Dorsolateral prefrontal cortex (tissue), 120 donors: ENCODE measurements at regions of chr13 and their contacts with region 1.

Region 1: DNA sequence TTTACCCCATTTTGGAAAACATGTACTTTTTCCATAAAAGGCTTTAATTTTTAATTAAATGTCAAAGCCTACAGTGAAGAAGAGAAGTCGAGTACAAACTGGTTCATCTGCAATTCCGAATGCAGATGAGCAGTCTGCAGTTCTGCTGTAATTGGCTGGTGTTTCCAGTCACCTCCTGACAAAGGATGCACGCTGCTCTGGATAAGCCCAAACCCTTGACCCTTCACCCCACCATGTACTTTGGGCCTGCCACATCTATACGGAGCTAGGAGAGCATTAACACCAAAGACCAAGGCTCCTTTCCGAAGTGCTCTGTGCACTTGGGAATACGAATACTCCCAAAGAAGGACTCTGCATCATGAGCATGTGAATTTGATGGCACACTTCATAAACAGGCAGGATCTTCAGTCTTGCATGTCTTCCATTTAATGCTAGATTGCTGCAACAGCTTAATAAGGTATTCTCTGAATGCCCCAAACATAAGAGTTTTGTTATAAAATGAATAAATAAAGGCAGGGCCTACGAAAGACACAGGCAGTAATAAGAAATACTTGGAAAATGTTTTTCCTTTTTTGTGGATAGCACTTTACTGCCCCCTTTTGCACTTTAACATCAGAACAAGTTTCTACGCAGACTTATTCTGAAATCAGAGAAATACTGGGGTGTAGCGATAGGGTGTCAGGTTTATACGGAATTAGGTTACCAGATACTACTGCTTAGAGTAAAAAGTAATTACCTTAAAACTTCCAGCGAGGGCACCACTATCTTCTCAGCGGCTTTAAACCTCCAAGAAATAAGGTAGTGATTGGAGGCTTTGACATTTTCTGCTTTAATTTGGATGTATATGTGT is 15.0 kb downstream of the EFNB2 start:
- DNase-seq: no peak
- H3K4me3 ChIP-seq: peak overlapping the region in 42 of 59 donors; percentile 1 to 54 (median 18)
- H3K27ac ChIP-seq: peak overlapping the region in 54 of 59 donors; percentile 5 to 87 (median 66)
- H3K27me3 ChIP-seq: no peaks in the 10 kb centered on the region
- CTCF ChIP-seq: peak; percentile 15 to 80 (median 64)

Region 2: DNA sequence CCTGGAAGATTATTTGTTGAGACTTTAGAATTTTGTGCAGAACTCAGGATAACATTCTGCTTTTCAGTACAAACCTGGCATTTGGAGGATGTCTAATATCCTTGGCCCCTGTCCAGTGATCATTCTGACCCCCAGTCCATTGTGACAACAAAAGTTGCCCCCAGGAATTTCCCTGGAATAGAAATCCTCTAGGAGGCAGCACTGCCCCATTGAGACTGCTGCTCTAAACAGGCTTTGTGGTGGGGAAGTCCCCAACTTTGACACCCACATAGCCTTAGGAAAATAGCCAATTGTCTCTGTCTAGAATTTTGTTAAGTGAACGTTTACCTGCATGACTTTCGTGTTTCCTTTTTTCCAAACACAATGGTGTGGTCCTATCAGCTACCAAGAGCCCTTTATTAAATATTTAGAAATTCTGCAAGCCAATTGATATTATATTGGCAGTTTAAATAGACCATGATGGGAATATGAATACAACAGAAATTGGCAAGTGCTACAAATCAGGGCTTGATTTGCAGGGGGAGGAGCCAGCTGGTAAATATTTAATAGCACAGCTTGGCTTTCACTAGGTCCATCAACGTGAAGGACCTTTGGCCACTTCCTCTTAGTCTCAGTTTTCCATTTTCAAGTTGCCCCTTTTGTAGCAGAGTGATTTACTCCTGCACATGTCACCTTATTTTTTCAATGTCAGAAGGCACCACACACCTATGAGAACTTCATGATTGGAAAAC is 436.6 kb before region 1 on chr13:
- intact Hi-C with region 1: loop called in 1 of 2 experiments (anchors 5 kb)
- DNase-seq: peak in 2 of 10 donors; percentile 32 to 47
- H3K4me3 ChIP-seq: no peak overlapping the region
- H3K27ac ChIP-seq: no peak overlapping the region
- H3K27me3 ChIP-seq: no peaks in the 10 kb centered on the region
- CTCF ChIP-seq: peak in 55 of 56 donors; percentile 36 to 84 (median 67)

Region 3: GRCh38 chr13:106373989-106374572 is 146.3 kb before region 1 on chr13:
- intact Hi-C with region 1: no loop called
- DNase-seq: no peak
- H3K4me3 ChIP-seq: no peak overlapping the region
- H3K27ac ChIP-seq: peak overlapping the region in 2 of 59 donors; percentile 18 to 46
- H3K27me3 ChIP-seq: no peaks in the 10 kb centered on the region
- CTCF ChIP-seq: no peak